ENCODE measurements at regions of chr10 and their contacts with region 1.

Region 1: DNA sequence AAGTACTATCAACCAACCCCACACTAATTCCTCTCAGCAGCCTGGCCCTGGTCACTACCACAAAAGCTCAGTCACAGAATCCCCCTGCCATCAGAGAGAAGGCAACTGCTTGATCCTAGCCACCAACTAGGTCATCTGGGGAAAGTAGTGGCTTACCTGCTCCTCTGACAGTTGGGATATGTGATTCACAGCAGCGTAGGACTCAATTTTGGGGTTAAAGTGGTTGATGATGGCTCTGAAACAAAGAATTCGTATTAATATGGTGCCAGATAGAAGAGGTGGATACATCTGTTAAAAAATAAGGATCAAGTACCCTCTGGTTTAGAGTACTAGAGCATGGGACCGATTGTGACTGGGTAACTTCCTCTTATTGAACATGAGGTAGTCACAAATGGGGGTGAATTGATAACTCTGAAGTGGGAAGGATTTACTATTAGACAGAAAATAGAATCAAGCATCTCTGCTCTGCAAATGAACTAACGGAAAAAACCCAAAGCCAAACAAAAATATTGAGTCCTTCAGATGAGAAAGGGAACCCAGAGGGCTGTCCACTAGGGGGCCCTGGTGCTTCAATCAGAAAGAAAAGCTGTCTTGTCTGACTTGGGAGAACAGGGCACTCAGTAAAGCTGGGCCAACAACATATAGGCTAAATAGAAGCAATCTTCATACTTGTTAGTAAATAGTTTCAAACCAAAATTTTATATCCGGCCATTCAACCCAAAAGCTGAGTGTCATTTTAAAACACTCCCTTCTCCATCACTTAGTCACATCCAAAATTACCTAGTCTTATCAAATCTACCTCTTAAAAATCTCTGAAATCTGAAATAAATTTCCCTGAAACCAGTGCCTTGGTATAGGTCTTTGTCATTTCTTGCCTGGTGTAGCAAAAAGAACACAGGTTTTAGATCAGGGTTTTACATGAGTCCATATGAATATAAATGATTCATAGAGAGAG is 45.9 kb upstream of the KCNIP2 start:
- DNase-seq: peak; percentile 72
- CTCF ChIP-seq: peak; percentile 82

Region 2: GRCh38 chr10:101769541-101770180 is 119.9 kb before region 1 on chr10:
- CTCF ChIA-PET with region 1: no interaction called
- POLR2A ChIA-PET with region 1: no interaction called
- DNase-seq: no peak
- CTCF ChIP-seq: no peak

Region 3: DNA sequence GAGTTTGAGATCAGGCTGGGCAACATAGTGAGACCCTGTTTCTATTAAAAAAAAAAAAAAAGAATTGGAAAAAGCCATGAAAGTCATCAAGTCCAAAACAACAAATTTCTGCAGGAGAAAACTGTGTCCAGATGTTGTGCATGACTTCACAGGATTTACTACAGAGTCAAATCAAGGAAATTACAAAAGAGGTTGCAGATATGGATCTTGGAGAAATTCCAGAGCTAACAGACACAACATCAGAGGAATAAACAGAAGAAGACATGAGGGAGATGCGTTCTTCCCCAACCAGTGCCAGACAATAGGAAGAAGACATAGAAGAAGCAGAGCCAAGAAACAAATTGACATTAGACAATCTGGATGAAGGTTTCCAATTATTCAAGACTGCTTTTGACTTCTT is 21.6 kb before region 1 on chr10:
- CTCF ChIA-PET with region 1: interaction called, 10 read pairs
- POLR2A ChIA-PET with region 1: no interaction called
- DNase-seq: no peak
- CTCF ChIP-seq: no peak

Region 4: DNA sequence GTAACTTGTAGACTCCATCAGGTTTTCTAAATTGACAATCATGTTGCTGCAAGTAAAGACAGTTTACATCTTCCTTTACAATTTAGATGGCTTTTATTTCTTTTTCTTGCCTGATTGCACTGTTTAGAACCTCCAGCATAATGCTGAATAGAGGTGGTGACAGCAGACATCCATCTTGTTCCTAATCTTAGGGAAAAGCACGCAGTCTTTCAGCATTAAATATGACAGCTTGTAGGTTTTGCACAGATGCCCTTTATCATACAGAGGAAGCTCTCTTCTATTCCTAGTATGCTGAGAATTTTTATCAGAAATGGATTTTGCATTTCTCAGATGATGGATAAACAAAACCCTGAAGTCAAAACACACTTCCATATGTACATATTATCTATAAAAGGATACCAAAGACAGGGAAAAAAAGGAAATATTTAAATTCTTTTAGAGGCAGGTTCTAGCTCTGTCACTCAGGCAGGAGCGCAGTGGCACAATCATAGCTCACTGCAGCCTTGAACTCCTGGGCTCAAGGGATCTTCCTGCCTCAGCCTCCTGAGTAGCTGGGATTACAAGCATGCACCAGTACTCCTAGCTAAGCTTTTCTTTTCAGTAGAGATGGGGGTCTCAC is 23.1 kb after region 1 on chr10:
- CTCF ChIA-PET with region 1: interaction called, 17 read pairs
- POLR2A ChIA-PET with region 1: interaction called, 6 read pairs
- DNase-seq: no peak
- CTCF ChIP-seq: no peak

Region 5: GRCh38 chr10:101974091-101974971 is 84.8 kb after region 1 on chr10:
- CTCF ChIA-PET with region 1: interaction called, 14 read pairs
- POLR2A ChIA-PET with region 1: no interaction called
- DNase-seq: no peak
- CTCF ChIP-seq: no peak

Region 6: GRCh38 chr10:102001435-102002068 is 112.0 kb after region 1 on chr10:
- CTCF ChIA-PET with region 1: interaction called, 249 read pairs
- POLR2A ChIA-PET with region 1: no interaction called
- DNase-seq: peak; percentile 46
- CTCF ChIP-seq: no peak

Region 7: DNA sequence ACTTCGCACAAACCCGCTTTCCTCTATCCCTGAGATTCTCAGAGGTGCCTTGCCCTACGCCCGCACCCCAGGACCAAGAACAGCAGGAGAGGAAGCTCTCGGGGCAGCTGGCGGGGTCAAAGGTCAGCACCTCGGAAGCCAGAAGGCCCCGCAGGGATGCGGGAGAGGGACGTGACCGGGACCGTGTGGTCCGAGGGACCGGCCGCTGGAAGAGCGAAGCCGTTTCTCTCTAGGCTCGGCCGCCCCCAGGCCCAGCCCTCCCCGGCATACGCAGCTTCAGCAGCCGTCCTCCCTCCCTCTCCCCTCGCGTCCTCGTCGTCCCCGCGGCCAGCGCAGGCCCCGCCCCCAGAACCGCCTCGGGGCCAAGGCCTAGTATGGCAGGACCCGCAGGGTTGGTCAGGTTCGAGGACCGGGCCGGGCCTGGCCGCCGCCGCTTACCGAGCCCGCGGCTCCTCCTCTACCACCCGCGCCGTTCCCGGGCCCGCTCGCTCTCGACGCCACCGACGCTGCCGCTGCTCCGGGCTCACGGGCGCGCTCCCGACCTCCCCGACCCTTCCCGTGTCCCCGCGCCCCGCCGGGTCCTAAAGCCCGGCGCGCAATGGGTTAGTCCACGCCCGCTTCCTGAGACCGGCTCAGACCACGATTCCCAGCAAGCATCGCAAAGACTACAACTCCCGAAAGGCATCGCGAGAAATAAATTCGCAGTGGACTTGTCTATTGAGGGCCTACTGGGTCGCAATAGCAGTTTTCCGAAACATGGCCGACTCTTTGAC is 166.3 kb after region 1 on chr10 and contains the start of gene ARMH3:
- CTCF ChIA-PET with region 1: interaction called, 10 read pairs
- POLR2A ChIA-PET with region 1: no interaction called
- DNase-seq: peak; percentile 98
- CTCF ChIP-seq: no peak